ENCODE measurements at regions of chr3 and their contacts with region 1.

Region 1: DNA sequence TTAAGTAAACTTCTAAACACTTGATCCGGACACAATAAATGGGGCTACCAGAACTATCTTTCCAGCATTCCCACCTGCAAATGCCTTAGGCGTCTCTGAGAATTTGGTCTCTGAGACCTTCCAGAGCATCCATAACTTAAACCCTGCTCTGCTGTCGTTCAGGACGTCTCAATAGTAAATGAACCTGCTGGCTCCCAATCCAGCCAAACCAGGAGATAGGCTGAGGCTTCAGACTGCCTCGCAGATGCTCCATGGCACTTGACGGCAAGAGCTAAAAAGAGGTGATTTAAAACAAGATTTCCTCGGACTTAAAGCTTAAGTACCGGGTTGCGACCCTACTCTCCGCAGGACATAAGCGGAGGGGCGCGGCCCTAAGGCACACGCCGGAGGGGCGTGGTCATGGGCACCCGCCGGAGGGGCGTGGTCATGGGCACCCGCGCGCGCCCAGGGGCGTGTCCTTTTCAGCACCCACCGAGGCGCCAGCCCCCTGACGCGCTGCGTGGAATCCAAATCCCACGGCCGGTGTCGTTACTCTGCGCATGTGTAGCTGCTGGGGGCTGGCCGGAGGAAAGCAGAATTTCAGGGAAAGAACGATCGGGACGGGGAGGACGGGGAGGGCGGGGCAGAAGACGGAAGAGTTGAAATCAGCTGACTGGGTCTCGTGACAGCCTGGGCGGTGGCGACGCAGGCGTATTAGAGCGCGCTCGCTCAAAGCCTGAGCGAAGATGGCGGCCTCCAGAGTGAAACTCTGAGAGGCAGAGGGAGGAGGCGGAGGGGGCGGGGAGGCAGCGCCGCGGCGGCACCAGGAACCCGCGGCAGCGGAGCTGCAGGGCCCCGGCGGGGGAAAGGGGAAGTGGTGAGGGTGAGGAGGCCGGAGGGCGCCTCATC is at the start of gene DNAJC13:
- DNase-seq: peak; percentile 90
- H3K4me3 ChIP-seq: peak within 1 kb of the TSS; percentile 81 to 90
- H3K27ac ChIP-seq: peak within 1 kb of the TSS; percentile 88 to 93
- H3K4me1 ChIP-seq: no peaks in the 10 kb centered on the region
- H3K27me3 ChIP-seq: no peaks in the 10 kb centered on the region
- CTCF ChIP-seq: no peak
- POLR2A ChIP-seq: peak; percentile 73
- total RNA-seq, gene DNAJC13: 25.0 to 46.2 TPM

Region 2: DNA sequence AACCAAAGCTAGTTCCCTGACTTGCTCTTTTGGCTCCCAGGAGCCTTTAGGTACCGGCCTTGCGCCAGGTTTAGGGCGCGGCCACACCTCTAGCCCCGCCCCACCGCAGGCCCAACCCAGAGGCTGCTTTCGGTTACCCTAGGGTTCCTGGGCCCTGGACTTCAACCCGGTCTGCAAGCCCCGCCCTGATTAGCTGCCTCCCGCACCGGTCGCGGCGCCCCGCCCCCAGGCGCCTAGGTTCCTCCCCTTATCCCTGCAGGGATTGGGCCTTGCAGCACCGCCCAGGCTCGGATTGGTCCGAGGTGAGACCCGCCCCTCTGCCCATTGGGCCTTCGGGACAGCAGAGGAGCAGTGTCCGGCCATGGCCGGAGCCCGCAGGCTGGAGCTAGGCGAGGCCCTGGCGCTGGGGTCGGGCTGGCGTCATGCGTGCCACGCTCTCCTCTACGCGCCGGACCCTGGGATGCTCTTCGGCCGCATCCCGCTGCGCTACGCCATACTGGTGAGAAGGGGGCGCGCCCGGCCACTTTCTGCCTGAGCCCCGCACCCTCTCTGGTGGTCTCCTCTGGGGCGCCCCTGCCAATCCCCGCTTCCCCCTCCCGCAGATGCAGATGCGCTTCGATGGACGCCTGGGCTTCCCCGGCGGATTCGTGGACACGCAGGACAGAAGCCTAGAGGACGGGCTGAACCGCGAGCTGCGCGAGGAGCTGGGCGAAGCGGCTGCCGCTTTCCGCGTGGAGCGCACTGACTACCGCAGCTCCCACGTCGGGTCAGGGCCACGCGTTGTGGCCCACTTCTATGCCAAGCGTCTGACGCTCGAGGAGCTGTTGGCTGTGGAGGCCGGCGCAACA is 1035.4 kb before region 1 on chr3 and contains the start of gene NUDT16:
- intact Hi-C with region 1: loop called (anchors 10 kb)
- DNase-seq: peak; percentile 99
- H3K4me3 ChIP-seq: peak within 1 kb of the TSS; percentile 67 to 99
- H3K27ac ChIP-seq: peak within 1 kb of the TSS; percentile 79 to 90
- H3K4me1 ChIP-seq: no peaks in the 10 kb centered on the region
- H3K27me3 ChIP-seq: no peaks in the 10 kb centered on the region
- CTCF ChIP-seq: peak in 1 of 4 experiments; percentile 4
- POLR2A ChIP-seq: peak; percentile 84
- total RNA-seq, gene NUDT16: 25.2 to 26.0 TPM

Region 3: DNA sequence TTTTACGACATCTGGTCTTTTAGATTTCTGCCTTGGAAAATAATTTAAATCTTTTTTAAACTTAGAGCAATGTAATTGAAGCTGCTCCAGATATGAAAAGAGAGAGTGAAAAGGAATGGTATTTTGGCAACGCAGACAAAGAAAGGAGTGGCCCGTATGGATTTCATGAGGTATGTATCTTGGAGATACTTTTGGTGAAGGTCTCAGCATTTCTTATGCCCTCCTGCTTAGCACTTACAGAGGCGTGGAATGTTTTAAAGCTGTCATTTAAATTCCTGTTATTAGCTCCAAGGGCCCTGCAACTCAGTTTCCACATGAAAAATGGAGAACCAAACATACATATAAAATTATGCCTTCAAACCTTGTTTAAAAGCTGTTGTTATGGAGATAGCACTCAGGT is 65.1 kb after region 1 on chr3:
- intact Hi-C with region 1: no loop called
- DNase-seq: no peak
- H3K4me3 ChIP-seq: no peak overlapping the region
- H3K27ac ChIP-seq: no peak overlapping the region
- H3K4me1 ChIP-seq: no peaks in the 10 kb centered on the region
- H3K27me3 ChIP-seq: no peaks in the 10 kb centered on the region
- CTCF ChIP-seq: no peak
- POLR2A ChIP-seq: no peak

Region 4: DNA sequence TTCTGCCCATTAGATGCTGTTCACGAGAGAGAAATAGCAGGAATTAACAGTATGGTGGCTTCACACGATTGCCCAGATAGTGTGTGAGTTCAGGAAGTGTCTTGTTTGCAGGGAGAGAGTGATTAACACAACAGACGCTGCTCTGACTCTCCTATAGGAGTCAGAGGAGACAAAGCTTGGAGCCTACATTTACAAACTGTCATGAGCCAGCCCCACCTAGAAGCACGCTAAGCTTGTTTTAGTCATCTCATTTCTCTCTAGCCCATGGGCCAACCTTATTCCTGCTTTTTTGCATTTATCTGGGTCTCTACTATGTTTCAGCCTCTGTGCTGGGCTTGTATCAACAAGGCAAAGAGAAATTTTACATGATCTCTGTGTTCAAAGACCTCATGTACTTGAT is 854.5 kb after region 1 on chr3:
- intact Hi-C with region 1: no loop called
- DNase-seq: no peak
- H3K4me3 ChIP-seq: no peak overlapping the region
- H3K27ac ChIP-seq: no peak overlapping the region
- H3K4me1 ChIP-seq: no peaks in the 10 kb centered on the region
- H3K27me3 ChIP-seq: no peaks in the 10 kb centered on the region
- CTCF ChIP-seq: no peak
- POLR2A ChIP-seq: no peak